ENCODE measurements at regions of chr11 and their contacts with region 1.

Region 1: DNA sequence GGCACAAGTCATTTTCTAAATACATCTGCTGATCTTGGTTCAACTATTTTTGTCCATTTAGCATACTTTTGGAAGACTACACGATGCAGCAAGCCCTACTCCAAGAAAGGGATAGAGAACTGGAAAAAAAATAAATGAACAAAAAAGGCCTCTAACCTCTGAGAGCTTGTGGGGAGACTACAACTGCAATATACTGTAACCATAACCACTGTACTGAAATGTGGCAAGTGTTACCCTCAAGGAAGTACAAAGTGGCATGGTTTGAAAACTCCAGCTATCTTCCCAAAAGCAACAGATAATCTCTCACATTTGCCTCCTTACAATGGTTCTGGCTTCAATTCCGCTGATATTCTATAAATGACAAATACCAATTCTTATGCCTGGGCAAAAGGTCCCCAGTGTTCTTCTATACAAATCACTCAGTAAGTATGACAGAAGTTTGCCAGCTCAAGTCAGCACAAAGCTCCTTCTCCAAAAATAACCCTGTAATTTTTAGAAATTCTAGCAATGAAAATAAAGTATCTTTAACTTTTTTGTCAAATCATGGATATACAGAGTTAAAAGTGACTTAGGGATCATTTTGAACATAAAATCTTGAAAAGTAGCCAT is 22.9 kb downstream of the AMBRA1 start:
- DNase-seq: no peak
- ATAC-seq: no peak
- H3K4me3 ChIP-seq: no peak overlapping the region
- H3K27ac ChIP-seq: no peak overlapping the region; the same call in 2 of the 3 replicates
- H3K4me1 ChIP-seq: peaks cover 0 to 4% of the 10 kb centered on the region in 2 experiments; a peak in 2 of 5 replicates
- H3K27me3 ChIP-seq: no peaks in the 10 kb centered on the region
- CTCF ChIP-seq: no peak
- EP300 ChIP-seq: no peak
- POLR2A ChIP-seq: no peak
- RAD21 ChIP-seq: no peak

Region 2: GRCh38 chr11:46560300-46560991 is 10.4 kb before region 1 on chr11:
- CTCF ChIA-PET with region 1: no interaction called
- POLR2A ChIA-PET with region 1: interaction called, 20 read pairs
- in situ Hi-C with region 1: no loop called
- intact Hi-C with region 1: no loop called
- DNase-seq: peak in 1 of 4 experiments; percentile 29
- ATAC-seq: peak; percentile 39
- H3K4me3 ChIP-seq: peak overlapping the region; percentile 20
- H3K27ac ChIP-seq: peak overlapping the region; percentile 70
- H3K4me1 ChIP-seq: peaks cover 17 to 27% of the 10 kb centered on the region in 2 experiments
- H3K27me3 ChIP-seq: no peaks in the 10 kb centered on the region
- CTCF ChIP-seq: no peak
- EP300 ChIP-seq: no peak
- POLR2A ChIP-seq: no peak
- RAD21 ChIP-seq: no peak